Body of pancreas (tissue), 4 donors: ENCODE measurements at regions of chr7 and their contacts with region 1.

Region 1: DNA sequence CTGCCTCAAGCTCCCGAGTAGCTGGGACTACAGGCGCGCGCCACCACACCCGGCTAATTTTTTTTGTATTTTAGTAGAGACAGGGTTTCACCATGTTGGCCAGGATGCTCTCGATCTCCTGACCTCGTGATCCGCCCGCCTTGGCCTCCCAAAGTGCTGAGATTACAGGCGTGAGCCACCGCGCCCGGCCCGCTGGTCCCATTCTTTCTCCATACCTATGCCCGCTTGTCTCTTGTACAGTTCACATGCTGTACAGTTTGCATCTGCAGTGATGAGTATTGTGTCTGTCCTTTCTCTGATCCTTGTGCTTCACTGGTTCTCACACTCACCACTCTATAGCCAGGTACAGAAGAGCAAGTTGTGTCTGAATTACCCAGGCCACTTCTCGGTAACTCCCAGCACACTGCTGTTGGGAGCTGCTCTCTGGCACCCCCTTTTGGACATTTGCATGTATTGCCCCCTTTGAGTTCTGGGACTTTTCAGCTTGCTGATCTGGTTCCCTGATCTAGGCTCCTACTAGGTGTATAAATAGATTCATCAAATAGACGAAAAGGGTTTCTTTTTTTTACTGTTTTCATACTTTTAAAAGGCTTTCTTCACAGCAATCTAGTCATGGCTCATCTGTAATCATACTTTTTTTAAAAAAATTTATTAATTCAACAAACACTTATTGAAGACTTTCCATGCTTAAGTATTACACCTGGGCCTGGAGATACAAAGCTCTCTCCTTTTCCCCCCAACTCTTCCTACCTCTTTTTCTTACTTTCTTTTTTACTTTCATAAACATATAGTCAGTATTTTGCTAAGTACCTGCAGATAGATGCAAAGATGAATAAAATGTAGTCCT is 53.5 kb downstream of the AOAH start:
- DNase-seq: peak; percentile 65 to 73 (median 68)
- ATAC-seq: peak; percentile 86
- H3K4me3 ChIP-seq: no peak overlapping the region
- H3K27ac ChIP-seq: no peak overlapping the region
- H3K4me1 ChIP-seq: no peaks in the 10 kb centered on the region
- H3K27me3 ChIP-seq: no peaks in the 10 kb centered on the region
- CTCF ChIP-seq: peak; percentile 77 to 88 (median 85)
- POLR2A ChIP-seq: no peak

Region 2: DNA sequence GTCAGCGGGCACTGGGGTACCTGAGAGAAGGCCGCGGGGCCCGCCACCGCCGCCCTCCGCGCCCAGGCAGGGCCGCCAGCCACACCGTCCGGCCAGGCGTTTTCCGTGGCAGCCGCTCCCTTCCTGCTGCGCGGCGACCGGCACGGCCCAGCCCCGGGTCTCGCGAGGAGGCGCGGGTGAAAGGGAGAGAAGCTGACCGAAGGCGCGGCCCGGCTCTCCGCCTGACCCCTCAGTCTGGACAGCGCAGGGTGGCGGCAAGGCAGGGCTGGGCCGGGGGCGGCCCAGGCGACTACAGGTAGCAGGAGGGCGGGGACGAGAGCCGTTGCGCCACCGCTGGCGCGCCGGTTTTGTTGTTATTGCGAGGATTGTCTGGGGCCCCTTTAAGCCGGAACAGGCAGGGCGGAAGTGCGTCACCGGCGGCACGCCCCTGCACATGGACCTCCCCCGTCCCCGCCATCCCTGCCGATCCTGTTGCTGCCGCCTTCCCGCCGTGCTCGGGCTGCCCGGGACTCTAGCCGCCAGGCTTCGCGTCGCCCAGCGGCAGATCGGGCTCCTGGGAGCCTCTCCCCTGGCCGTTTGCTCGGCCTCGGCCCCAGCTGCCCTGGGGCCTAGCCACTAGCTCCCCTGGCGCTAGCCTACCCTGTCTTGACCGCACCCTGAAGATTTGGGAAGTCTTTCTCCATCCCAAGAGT is 975.9 kb before region 1 on chr7 and contains the start of gene HERPUD2:
- intact Hi-C with region 1: no loop called
- DNase-seq: peak; percentile 94 to 97 (median 96)
- ATAC-seq: peak; percentile 95
- H3K4me3 ChIP-seq: peak within 1 kb of the TSS; percentile 86 to 95
- H3K27ac ChIP-seq: peak within 1 kb of the TSS; percentile 87 to 97 (median 93)
- H3K4me1 ChIP-seq: peaks cover 50% of the 10 kb centered on the region
- H3K27me3 ChIP-seq: no peaks in the 10 kb centered on the region
- CTCF ChIP-seq: no peak
- POLR2A ChIP-seq: peak; percentile 93 to 95 (median 93)
- total RNA-seq, gene HERPUD2: 19.4 to 21.5 TPM

Region 3: DNA sequence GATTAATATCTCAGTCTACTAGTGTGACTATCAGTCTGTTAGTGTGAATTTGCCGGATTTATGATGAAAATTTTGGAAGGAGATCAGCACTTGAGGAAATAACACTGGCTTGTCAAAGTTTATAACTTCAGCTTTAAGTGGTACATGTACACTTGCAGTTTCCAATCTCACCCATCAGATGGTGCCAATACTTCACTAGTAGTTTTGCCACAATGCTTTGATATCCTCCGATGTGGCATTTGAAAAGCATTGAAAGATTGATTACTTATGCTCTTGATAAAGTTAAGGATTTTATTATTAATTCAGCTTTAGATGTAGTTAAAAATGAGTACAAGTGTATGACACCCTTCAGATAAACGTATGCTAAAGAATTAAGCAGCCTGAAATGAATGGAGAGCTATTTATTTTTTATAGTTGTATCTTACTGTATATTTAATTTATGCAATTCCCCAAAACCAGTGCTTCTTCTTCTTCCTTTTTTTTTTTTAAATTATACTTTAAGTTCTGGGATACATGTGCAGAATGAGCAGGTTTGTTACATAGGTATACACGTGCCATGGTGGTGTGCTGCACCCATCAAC is 183.0 kb before region 1 on chr7:
- intact Hi-C with region 1: loop called (anchors 10 kb)
- DNase-seq: peak; percentile 36 to 64 (median 46)
- ATAC-seq: peak; percentile 82
- H3K4me3 ChIP-seq: no peak overlapping the region
- H3K27ac ChIP-seq: no peak overlapping the region
- H3K4me1 ChIP-seq: no peaks in the 10 kb centered on the region
- H3K27me3 ChIP-seq: no peaks in the 10 kb centered on the region
- CTCF ChIP-seq: peak; percentile 40 to 94 (median 91)
- POLR2A ChIP-seq: no peak

Region 4: DNA sequence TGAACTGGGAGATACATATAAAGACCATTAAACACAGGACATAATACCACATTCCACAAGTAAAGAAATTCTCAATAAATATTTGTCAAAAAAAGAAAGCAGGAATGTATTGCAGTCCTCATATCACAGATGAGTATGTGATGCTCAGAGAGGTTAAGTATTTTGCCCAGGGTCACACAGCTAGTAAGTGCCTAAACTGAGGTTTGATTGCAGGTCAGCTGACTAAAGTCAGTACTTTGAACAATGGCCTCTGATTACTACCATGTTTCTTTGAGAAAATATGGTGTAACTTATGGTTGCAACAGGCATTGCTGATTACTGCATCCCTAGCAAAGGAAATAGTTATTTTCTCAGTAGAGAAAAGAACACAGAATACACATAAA is 510.7 kb after region 1 on chr7:
- intact Hi-C with region 1: loop called (anchors 10 kb)
- DNase-seq: no peak
- ATAC-seq: no peak
- H3K4me3 ChIP-seq: no peak overlapping the region
- H3K27ac ChIP-seq: no peak overlapping the region
- H3K4me1 ChIP-seq: peaks cover 15% of the 10 kb centered on the region
- H3K27me3 ChIP-seq: no peaks in the 10 kb centered on the region
- CTCF ChIP-seq: no peak
- POLR2A ChIP-seq: no peak